ENCODE measurements at regions of chr4 and their contacts with region 1.

Region 1: DNA sequence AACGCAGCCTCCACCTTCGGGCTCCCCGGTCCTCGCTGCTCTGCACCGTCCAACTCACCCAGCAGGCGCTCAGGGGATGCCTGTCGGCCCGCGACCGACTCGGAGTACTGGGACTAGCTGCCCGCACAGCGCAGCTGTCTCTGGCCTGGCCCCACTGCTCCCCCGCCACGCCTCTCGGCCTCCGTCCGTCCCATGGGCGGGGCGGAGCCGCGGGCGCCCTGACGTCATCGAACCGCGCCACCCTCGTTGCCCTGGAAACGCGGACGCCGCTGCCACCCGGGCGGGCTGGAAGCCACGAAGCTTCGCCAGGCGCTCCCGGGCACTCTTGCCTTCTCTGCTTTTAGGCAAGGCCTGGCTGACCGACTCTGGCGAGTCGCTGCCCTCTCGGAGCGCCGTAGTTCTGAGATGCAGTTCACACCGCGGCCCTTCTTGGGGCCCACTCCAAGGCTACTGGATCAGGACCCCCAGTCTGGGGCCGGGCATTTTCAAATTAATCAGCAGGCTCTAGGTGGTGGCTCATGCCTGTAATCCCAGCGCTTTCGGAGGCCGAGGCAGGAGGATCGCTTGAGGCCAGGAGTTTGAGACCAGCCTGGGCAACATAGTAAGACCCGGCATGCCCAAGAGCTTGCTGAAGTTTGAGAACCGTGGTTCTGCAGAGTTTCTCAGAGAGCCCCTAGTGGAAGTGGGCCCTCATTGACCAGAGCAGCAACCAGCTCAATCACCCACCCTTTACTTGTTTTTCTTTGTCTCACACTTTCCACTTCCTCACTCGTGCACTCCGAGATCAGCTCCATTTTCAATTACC is 12.0 kb downstream of the ACOX3 start:
- DNase-seq: peak; percentile 67
- ATAC-seq: peak; percentile 97
- H3K4me3 ChIP-seq: peak overlapping the region; percentile 77 to 91 (median 79)
- H3K27ac ChIP-seq: peak overlapping the region; percentile 70
- H3K4me1 ChIP-seq: peaks cover 15% of the 10 kb centered on the region
- H3K27me3 ChIP-seq: no peaks in the 10 kb centered on the region; a peak in 1 of 5 replicates
- CTCF ChIP-seq: no peak
- EP300 ChIP-seq: no peak
- POLR2A ChIP-seq: peak; percentile 81 to 85
- RAD21 ChIP-seq: no peak

Region 2: DNA sequence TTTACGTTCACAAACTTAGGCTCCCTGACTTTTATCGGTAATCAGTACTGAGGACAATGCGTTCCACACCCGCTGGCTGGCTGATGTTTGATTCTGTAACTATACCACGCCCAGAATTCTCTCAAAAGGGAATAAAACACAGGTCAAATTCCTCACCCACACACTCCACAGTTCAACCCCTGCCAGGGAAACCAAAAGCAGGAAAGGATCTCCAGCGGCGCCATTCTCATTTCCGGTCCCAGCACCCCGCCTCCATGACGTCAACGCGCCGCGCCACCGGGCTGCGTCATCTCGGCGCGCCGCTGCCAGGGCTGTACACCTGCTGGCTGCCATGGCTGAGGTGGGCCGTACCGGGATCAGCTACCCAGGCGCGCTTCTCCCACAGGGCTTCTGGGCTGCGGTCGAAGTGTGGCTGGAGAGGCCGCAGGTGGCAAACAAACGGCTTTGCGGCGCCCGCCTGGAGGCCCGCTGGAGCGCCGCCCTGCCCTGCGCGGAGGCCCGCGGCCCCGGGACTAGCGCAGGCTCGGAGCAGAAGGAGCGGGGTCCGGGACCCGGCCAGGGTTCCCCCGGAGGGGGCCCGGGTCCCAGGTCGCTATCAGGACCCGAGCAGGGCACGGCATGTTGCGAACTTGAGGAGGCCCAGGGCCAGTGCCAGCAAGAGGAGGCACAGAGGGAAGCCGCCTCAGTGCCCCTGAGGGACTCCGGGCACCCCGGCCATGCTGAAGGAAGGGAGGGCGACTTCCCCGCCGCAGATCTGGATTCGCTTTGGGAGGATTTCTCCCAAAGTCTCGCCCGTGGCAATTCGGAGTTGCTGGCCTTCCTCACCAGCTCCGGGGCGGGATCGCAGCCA is 12.2 kb after region 1 on chr4 and contains the starts of genes ACOX3 and TRMT44:
- CTCF ChIA-PET with region 1: no interaction called
- POLR2A ChIA-PET with region 1: interaction called, 30 read pairs
- in situ Hi-C with region 1: no loop called
- intact Hi-C with region 1: no loop called
- DNase-seq: peak; percentile 80
- ATAC-seq: peak; percentile 95
- H3K4me3 ChIP-seq: peak within 1 kb of the TSS; percentile 87 to 97 (median 89)
- H3K27ac ChIP-seq: peak within 1 kb of the TSS; percentile 90
- H3K4me1 ChIP-seq: peaks cover 34% of the 10 kb centered on the region
- H3K27me3 ChIP-seq: no peaks in the 10 kb centered on the region; a peak in 1 of 5 replicates
- CTCF ChIP-seq: peak; percentile 29; the same call in 1 of the 2 replicates
- EP300 ChIP-seq: 0 out of 4 replicates have a peak, but pooled peaks of 1 of the 2 experiments have one; percentile 22
- POLR2A ChIP-seq: peak; percentile 73 to 77
- RAD21 ChIP-seq: no peak; the same call in 1 of the 2 replicates
- total RNA-seq, gene ACOX3: 17.0 and 17.8 TPM in 2 replicates
- total RNA-seq, gene TRMT44: 6.5 and 8.6 TPM in 2 replicates

Measured in HepG2 (cell line).